ENCODE measurements at regions of chr5 and their contacts with region 1.

Region 1: DNA sequence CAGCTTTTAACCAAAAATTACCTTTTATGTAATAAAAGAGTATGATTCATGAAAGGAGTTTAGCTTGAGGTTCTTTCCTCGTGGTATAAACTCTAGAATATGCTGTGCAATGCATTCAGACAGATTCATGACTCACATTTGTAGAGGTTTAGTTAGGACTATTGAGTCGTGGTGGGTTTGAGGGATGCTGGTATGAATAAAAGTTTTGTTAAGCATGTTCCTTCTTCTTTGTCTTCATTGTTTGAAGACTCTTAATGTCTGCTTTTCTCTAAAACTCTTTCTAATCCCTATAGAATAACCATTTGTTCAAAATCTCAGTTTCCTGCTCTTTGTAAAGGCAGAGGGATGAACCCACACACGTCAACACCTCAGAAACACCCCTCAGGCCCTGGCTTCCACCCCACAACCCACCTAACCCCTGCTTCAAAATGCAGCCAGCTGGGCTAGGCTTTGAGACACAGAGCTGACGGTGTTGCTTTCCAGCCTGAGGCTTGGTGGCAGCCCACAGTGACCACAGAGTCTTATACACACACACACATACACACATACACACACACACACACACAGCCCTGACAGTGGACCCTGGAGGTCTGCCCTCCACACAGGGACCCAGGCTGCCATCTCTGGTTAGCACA is 69.0 kb upstream of the IRX1 start:
- DNase-seq: no peak
- H3K4me3 ChIP-seq: no peak overlapping the region
- H3K27ac ChIP-seq: no peak overlapping the region
- H3K4me1 ChIP-seq: no peaks in the 10 kb centered on the region
- H3K27me3 ChIP-seq: no peaks in the 10 kb centered on the region
- CTCF ChIP-seq: no peak
- POLR2A ChIP-seq: no peak

Region 2: DNA sequence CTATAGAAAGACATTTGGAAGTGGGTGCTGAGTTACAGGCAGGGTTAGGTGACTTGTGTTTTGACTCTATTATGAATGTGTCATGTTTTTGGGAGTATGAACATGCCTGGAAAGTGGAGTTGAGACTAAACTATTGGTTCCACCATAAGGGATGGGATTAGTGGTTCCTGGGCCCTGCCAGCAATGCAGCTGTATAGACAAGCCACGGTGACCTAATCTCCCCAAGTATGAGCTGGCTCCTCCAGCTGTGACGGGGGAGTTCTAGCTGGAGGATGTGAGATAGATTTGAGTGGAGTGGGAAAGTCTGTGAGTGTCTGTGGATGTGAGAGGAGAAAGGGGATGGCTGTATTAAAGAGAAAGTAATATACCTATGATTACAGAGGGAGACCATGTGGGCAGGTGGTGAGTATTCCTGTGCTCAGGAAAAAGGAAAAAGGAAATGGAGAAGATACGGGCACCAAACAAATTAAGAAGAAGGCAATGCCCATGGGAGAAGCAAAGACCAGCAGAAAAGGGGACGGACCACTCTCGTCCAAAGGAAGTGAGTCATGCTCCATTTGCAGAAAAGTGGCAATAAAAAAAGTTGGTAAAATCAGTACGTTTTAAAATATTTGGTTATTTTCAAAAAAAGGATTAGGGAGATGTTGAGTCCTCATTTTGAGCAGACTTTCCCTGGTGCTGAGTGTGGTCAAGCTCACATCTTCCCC is 1847.5 kb after region 1 on chr5:
- intact Hi-C with region 1: loop called (anchors 10 kb)
- DNase-seq: no peak
- H3K4me3 ChIP-seq: no peak overlapping the region
- H3K27ac ChIP-seq: no peak overlapping the region
- H3K4me1 ChIP-seq: no peaks in the 10 kb centered on the region
- H3K27me3 ChIP-seq: no peaks in the 10 kb centered on the region
- CTCF ChIP-seq: no peak
- POLR2A ChIP-seq: no peak

Measured in breast epithelium (tissue), 4 donors.